PC-9 (cell line): ENCODE measurements at regions of chr1 and their contacts with region 1.

Region 1: DNA sequence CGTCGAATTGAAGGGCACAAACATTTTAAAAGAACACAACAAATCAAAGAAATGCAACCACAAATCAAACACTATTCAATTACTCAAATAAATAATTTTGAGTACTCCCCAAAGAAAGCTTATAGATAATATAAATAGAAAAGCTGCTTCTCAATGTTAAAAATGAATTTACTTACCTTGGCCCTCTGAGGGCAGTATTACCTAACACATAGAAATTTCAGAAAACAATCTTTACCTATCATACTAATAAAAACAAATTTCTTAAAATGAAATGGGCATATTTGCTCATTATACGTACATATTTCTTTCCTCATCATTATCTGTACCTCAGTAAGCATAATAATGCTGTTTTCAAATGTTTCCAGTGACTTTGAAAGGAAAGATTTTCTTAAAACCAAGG is 141.8 kb downstream of the AKT3 start:
- DNase-seq: no peak
- H3K4me3 ChIP-seq: no peak overlapping the region
- H3K27ac ChIP-seq: no peak overlapping the region
- H3K4me1 ChIP-seq: no peaks in the 10 kb centered on the region
- H3K27me3 ChIP-seq: no peaks in the 10 kb centered on the region
- CTCF ChIP-seq: peak; percentile 55; the same call in 1 of the 2 replicates

Region 2: GRCh38 chr1:243179714-243180113 is 528.5 kb before region 1 on chr1:
- CTCF ChIA-PET with region 1: no interaction called
- POLR2A ChIA-PET with region 1: no interaction called
- intact Hi-C with region 1: no loop called
- DNase-seq: no peak
- H3K4me3 ChIP-seq: no peak overlapping the region
- H3K27ac ChIP-seq: no peak overlapping the region
- H3K4me1 ChIP-seq: no peaks in the 10 kb centered on the region
- H3K27me3 ChIP-seq: no peaks in the 10 kb centered on the region
- CTCF ChIP-seq: no peak

Region 3: GRCh38 chr1:243596431-243597062 is 111.7 kb before region 1 on chr1:
- CTCF ChIA-PET with region 1: no interaction called
- POLR2A ChIA-PET with region 1: no interaction called
- intact Hi-C with region 1: no loop called
- DNase-seq: no peak
- H3K4me3 ChIP-seq: no peak overlapping the region
- H3K27ac ChIP-seq: 0 out of 2 replicates have a peak overlapping the region, but pooled peaks have one; percentile 18
- H3K4me1 ChIP-seq: peaks cover 10% of the 10 kb centered on the region
- H3K27me3 ChIP-seq: no peaks in the 10 kb centered on the region
- CTCF ChIP-seq: no peak

Region 4: GRCh38 chr1:243748706-243749283 is 40.6 kb after region 1 on chr1:
- CTCF ChIA-PET with region 1: interaction called, 6 read pairs
- POLR2A ChIA-PET with region 1: no interaction called
- intact Hi-C with region 1: loop called (anchors 5 kb)
- DNase-seq: peak; percentile 7 to 67
- H3K4me3 ChIP-seq: no peak overlapping the region
- H3K27ac ChIP-seq: peak overlapping the region; percentile 10; the same call in 1 of the 2 replicates
- H3K4me1 ChIP-seq: no peaks in the 10 kb centered on the region
- H3K27me3 ChIP-seq: no peaks in the 10 kb centered on the region
- CTCF ChIP-seq: peak; percentile 83

Region 5: DNA sequence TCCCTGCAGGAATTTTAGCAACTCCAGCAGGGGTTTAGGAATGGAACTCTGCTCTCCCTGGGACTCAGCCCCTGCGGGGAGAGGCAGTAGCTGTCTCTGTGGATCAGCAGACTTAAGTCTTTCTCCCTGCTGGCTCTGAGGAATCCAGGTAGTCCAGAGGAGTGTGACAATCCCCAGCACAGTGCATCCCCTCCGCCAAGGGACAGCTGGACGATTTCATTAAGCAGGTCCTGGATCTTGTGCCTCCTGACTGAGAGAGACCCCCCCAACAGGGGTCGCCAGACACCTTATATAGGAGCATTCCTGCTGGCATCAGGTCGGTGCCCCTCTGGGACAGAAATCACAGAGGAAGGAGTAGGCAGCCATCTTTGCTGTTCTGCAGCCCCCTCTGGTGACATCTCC is 111.2 kb after region 1 on chr1:
- CTCF ChIA-PET with region 1: no interaction called
- POLR2A ChIA-PET with region 1: interaction called, 14 read pairs
- intact Hi-C with region 1: no loop called
- DNase-seq: no peak
- H3K4me3 ChIP-seq: no peak overlapping the region
- H3K27ac ChIP-seq: no peak overlapping the region
- H3K4me1 ChIP-seq: no peaks in the 10 kb centered on the region
- H3K27me3 ChIP-seq: no peaks in the 10 kb centered on the region
- CTCF ChIP-seq: no peak